ENCODE measurements at regions of chr12 and their contacts with region 1.

Region 1: DNA sequence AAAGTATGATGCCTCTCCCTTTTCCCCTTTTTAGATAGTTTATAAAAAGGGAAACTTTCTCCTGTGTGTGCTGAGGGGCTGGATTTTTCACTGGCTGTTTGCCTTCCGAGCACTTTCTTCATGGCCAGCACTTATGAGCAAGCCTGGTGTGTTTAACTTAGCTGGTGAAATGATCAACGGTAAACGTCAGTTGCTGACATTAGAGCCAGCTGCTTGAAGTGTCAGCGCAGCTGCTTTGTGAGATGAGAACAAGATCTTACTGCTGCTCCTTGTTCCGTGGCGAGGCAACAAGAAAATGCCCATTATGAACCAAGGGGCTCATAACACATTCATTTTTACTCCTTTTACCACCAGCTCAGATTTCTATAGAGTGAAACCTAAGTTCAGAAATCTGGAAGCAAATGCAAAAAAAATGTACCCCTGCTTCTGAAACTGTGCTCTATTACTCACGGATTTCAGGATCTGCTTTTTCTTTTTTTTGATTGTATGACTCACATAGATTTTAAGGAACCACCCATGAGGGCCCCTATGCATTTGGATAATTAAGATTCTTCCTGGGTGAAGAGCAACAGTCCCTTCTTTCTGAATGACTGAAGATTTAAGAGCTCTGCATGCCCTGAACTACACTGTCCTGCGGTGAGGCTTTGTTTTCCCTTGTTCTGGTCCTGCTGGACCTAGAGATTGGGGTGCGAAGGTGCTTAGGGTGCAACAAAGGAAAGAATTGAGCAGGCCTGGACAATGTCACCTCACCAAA is 74.3 kb upstream of the CPM start:
- DNase-seq: peak in 1 of 2 experiments; percentile 62
- H3K4me3 ChIP-seq: peak overlapping the region; percentile 15; the same call in 1 of the 2 replicates
- H3K27ac ChIP-seq: peak overlapping the region; percentile 74
- H3K4me1 ChIP-seq: peaks cover 31% of the 10 kb centered on the region
- H3K27me3 ChIP-seq: no peaks in the 10 kb centered on the region
- CTCF ChIP-seq: no peak

Region 2: DNA sequence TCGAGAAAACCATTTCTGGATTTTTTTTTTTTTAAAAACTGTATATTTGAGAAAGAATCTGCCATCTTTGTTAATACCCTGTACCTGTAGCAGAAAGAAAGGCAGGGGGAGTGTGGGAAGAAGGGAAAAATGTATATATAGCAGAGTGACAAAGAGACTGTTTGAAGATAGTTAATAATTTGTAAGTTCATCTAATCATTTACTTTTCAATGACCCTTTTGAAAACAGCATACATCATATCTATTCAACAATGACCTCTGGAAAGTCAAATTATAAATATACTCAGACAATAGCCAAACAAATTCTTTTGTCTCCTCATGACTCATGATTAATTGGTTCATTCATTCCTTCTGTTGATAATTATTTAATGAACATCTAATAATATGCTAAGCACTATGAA is 63.4 kb before region 1 on chr12:
- CTCF ChIA-PET with region 1: no interaction called
- POLR2A ChIA-PET with region 1: interaction called, 3 read pairs
- intact Hi-C with region 1: loop called (anchors 5 kb)
- DNase-seq: no peak
- H3K4me3 ChIP-seq: no peak overlapping the region
- H3K27ac ChIP-seq: no peak overlapping the region
- H3K4me1 ChIP-seq: 0 out of 2 replicates have a peak, but pooled peaks cover 5% of the 10 kb centered on the region
- H3K27me3 ChIP-seq: no peaks in the 10 kb centered on the region
- CTCF ChIP-seq: no peak

Region 3: GRCh38 chr12:68971351-68971772 is 35.9 kb before region 1 on chr12:
- CTCF ChIA-PET with region 1: no interaction called
- POLR2A ChIA-PET with region 1: interaction called, 11 read pairs
- intact Hi-C with region 1: no loop called
- DNase-seq: peak; percentile 15 to 62
- H3K4me3 ChIP-seq: peak overlapping the region; percentile 21; the same call in 1 of the 2 replicates
- H3K27ac ChIP-seq: peak overlapping the region; percentile 89
- H3K4me1 ChIP-seq: peaks cover 25% of the 10 kb centered on the region
- H3K27me3 ChIP-seq: no peaks in the 10 kb centered on the region
- CTCF ChIP-seq: no peak

Region 4: GRCh38 chr12:69052613-69053408 is 45.5 kb after region 1 on chr12:
- CTCF ChIA-PET with region 1: no interaction called
- POLR2A ChIA-PET with region 1: no interaction called
- intact Hi-C with region 1: loop called (anchors 1 kb)
- DNase-seq: peak; percentile 79 to 88
- H3K4me3 ChIP-seq: 0 out of 2 replicates have a peak overlapping the region, but pooled peaks have one; percentile 1
- H3K27ac ChIP-seq: peak overlapping the region; percentile 71
- H3K4me1 ChIP-seq: peaks cover 23% of the 10 kb centered on the region
- H3K27me3 ChIP-seq: no peaks in the 10 kb centered on the region
- CTCF ChIP-seq: no peak

Region 5: GRCh38 chr12:69070319-69071090 is 63.2 kb after region 1 on chr12:
- CTCF ChIA-PET with region 1: interaction called, 13 read pairs
- POLR2A ChIA-PET with region 1: interaction called, 11 read pairs
- intact Hi-C with region 1: loop called (anchors 5 kb)
- DNase-seq: peak in 1 of 2 experiments; percentile 45
- H3K4me3 ChIP-seq: no peak overlapping the region
- H3K27ac ChIP-seq: no peak overlapping the region
- H3K4me1 ChIP-seq: 0 out of 2 replicates have a peak, but pooled peaks cover 11% of the 10 kb centered on the region
- H3K27me3 ChIP-seq: no peaks in the 10 kb centered on the region
- CTCF ChIP-seq: peak; percentile 93

Measured in PC-9 (cell line).